Left cardiac atrium (tissue), 4 donors: ENCODE measurements at regions of chr10 and their contacts with region 1.

Region 1: GRCh38 chr10:72331601-72332422 is 22.9 kb downstream of the DNAJB12 start:
- DNase-seq: peak; percentile 86
- ATAC-seq: peak; percentile 62 to 69

Region 2: GRCh38 chr10:72058989-72059842 is 272.6 kb before region 1 on chr10:
- intact Hi-C with region 1: loop called (anchors 10 kb)
- DNase-seq: no peak
- ATAC-seq: peak; percentile 13 to 17

Region 3: DNA sequence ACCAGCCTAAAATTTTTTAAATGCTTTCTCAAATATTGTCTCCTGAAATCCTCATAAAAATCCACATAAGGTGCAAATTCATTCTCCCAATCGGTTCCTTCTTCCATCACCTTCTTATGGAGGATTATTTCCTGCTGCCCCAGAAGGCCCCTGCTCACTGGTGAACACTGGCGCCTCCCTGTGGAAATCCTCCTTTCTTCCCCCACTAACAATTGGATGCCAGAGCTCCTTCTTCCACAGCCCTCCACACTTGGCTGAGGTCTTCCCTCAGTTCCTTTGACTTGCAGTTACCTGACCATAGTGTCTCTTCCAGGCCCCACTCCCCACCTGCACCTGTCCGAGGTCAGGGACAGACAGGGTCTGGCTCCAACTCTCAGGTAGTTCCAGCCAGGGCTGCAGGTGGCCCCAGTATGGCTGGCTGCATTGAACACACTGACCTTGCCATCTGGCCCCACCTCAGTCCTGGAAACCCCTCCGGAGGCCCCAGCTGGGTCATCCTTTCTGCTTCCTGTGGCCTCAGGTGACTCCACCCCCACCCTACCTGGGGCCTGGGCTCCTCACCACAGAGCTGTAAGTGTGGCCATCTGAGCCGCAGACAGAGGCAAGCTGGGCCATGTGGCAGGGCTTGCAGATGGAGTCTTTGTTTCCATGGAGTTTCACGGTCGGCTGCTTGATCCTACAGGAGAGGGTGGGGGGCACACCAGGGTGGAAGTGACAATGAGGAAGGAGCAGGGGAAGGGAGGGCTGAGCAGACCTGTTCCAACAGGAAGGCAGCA is 261.9 kb before region 1 on chr10:
- intact Hi-C with region 1: loop called in 1 of 2 experiments (anchors 10 kb)
- DNase-seq: no peak
- ATAC-seq: no peak

Region 4: DNA sequence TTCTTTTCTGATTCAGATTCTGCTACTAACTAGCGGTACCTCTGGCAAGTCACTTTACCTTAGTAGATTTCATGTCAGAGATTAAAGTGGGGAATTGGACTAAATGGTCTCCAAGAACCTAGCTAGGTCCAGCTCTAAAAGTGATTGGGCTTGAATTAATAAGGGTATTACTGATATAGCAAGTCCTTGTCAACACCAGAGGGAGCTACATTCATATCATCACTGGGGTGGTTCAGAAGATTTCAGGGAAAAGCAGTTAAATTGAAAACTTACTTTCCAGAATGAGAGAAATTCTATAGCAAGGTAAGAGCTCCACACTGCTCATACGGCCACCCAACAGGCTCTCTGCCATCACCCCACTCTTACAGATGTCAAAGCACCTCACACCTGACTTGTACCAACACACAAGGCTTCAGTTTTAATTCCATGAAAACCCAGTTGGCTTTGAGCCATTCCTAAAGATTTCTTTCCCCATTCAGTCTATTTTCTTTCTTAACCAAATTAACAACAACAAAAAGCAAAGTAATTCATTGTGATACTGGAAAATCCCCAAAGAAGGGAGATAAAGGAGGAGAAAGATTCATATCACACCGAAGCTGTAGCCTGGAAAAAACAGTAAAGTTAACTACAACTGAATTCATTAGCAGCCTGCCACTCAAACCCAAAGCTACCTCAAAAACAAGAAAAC is 205.5 kb before region 1 on chr10:
- intact Hi-C with region 1: loop called (anchors 5 kb)
- DNase-seq: no peak
- ATAC-seq: no peak

Region 5: DNA sequence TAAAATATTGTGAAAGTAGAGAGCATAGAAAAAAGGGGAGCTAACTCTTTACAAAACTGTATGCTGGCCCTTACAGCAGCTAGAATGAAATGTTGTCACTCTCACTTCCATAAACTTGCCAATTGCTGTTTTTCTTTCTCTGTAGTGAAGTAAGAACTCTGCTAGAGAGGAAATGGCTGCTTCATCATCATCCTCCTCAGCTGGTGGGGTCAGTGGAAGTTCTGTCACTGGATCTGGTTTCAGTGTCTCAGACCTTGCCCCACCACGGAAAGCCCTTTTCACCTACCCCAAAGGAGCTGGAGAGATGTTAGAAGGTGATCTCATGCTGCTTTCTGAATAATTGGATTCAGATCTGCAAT is 108.1 kb before region 1 on chr10:
- intact Hi-C with region 1: loop called (anchors 5 to 10 kb)
- DNase-seq: no peak
- ATAC-seq: peak in 1 of 2 donors; percentile 34

Region 6: GRCh38 chr10:72243822-72244643 is 87.8 kb before region 1 on chr10:
- intact Hi-C with region 1: loop called in 1 of 2 experiments (anchors 5 kb)
- DNase-seq: peak; percentile 65
- ATAC-seq: peak; percentile 11 to 34